Mammary epithelial cell (primary cell): ENCODE measurements at regions of chr3 and their contacts with region 1.

Region 1: DNA sequence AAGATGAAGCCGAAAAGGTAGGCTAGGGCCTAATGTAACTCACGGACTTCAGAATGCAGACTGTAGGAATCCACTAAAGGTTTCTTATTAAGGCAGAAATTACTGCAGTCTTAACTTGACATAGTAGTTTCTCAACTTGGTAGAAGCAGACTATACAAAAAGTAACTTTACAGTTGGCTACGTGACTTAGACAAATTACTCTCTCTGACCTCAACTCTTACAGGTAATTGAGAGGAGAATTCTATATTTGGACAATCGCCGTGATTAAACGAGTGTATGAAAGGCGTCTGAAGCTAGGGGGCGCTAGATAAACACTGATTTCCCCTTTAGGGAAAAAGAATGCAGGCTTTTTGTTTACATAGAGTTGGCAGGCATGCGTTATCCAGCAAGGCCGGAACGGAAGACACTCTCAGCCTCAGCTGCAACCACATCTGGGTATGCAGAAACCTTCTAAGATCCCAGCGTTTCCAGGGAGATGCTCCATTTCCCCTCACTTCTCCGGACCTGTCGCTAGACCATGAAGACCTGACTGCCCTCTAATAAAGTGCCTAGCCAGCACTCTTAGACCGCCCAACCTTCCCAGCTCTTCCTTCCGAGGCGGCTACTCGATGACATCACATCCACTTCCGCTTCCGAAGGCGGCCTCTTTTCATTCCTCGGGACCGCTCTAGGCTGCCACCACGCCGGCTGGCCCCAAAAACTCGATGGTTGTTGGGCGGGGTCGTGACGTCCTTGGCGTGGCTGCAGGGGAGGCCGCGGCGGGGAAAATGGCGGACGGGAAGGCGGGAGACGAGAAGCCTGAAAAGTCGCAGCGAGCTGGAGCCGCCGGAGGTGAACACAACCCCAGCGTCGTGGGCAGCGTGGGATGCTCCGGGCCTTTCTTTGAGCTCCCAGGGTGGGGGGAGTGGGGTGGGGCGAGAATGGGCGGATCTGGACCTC is at the start of gene PCNP:
- DNase-seq: peak; percentile 99
- H3K4me3 ChIP-seq: peak within 1 kb of the TSS; percentile 70 to 98 (median 79)
- H3K27ac ChIP-seq: peak within 1 kb of the TSS; percentile 97
- H3K4me1 ChIP-seq: peaks cover 7% of the 10 kb centered on the region
- H3K27me3 ChIP-seq: no peaks in the 10 kb centered on the region
- CTCF ChIP-seq: peak; percentile 81 to 93
- total RNA-seq, gene PCNP: 85.9 to 176 TPM

Region 2: DNA sequence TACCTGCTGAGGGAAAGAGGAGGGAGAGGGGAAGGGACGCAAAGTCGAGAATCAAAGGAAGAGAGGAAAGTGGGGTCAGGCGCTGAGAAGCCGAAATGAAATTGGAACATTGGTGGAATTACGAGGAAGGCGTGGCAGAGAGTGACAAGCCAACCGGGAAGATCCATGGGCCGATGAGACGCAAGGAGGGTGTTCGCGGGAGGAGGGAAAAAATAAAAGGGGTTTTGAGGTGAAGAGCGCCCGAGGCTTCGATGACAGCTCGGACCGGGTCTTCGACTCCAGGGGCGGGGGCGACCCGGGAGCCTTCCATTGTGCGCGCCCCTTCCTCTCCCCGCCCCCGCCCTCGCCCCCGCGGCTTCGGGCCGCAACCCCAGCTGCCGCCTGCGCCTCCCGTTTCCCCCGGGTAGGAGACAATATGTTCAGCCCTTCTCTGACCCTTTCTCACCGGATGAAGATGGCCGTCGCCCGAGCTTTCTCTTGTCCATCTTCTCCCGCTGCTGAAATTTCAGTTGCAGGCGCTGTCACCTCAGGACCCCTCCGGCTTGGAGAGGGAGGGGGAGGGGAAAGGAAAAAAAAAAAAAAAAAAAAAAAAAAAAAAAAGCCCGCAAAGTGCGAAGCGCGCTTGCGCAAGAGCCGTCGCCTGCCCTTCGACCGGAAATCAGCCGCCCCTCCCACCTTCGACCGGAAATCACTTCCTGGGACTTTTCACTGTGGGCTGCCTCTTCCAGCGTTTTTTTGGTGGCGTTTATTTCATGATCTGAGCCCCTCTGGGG is 60.9 kb before region 1 on chr3 and contains the start of gene SENP7:
- CTCF ChIA-PET with region 1: no interaction called
- dilution Hi-C with region 1: no loop called
- in situ Hi-C with region 1: no loop called
- intact Hi-C with region 1: loop called (anchors 5 kb)
- DNase-seq: peak; percentile 83
- H3K4me3 ChIP-seq: peak within 1 kb of the TSS; percentile 68 to 94 (median 69)
- H3K27ac ChIP-seq: peak within 1 kb of the TSS; percentile 85
- H3K4me1 ChIP-seq: peaks cover 14% of the 10 kb centered on the region
- H3K27me3 ChIP-seq: no peaks in the 10 kb centered on the region
- CTCF ChIP-seq: no peak
- total RNA-seq, gene SENP7: 7.2 to 8.9 TPM

Region 3: DNA sequence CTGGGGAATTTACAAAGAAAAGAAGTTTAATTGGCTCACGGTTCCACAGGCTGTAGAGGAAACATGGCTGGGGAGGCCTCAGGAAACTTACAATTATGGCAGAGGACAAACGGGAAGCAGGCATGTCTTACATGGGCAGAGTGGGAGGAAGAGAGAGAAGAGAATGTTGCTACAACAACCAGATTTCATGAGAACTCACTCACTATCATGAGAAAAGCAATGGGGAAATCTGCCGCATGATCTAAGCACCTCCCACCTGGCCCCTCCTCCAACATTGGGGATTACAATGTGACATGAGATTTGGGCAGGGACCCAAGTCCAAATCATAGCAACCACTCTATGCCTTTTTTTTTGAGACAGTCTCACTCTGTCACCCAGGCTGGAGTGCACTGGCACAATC is 29.0 kb after region 1 on chr3:
- CTCF ChIA-PET with region 1: no interaction called
- dilution Hi-C with region 1: no loop called
- in situ Hi-C with region 1: no loop called
- intact Hi-C with region 1: loop called (anchors 1 kb)
- DNase-seq: no peak
- H3K4me3 ChIP-seq: no peak overlapping the region
- H3K27ac ChIP-seq: peak overlapping the region; percentile 79
- H3K4me1 ChIP-seq: peaks cover 10% of the 10 kb centered on the region
- H3K27me3 ChIP-seq: no peaks in the 10 kb centered on the region
- CTCF ChIP-seq: no peak

Region 4: GRCh38 chr3:101635954-101636798 is 62.5 kb after region 1 on chr3:
- CTCF ChIA-PET with region 1: no interaction called
- dilution Hi-C with region 1: no loop called
- in situ Hi-C with region 1: no loop called
- intact Hi-C with region 1: loop called (anchors 1 kb)
- DNase-seq: peak; percentile 37
- H3K4me3 ChIP-seq: no peak overlapping the region
- H3K27ac ChIP-seq: no peak overlapping the region
- H3K4me1 ChIP-seq: no peaks in the 10 kb centered on the region
- H3K27me3 ChIP-seq: no peaks in the 10 kb centered on the region
- CTCF ChIP-seq: peak; percentile 49 to 60

Region 5: DNA sequence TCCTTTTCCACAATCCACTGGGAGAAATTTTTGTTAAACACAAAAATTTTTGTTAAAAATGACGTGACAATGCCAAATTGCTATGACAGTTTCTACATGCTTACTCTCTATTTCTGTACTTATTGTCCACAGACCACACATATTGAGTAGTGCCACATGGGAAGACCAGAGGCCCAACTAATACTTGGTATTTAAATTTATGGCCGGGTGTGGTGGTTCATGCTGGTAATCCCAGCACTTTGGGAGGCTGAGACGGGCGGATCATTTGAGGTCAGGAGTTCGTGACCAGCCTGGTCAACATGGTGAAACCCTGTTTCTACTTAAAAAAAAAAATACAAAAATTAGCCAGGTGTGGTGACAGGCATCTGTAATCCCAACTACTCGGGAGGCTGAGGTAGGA is 82.9 kb after region 1 on chr3:
- CTCF ChIA-PET with region 1: no interaction called
- dilution Hi-C with region 1: no loop called
- in situ Hi-C with region 1: no loop called
- intact Hi-C with region 1: loop called (anchors 5 kb)
- DNase-seq: no peak
- H3K4me3 ChIP-seq: no peak overlapping the region
- H3K27ac ChIP-seq: no peak overlapping the region
- H3K4me1 ChIP-seq: no peaks in the 10 kb centered on the region
- H3K27me3 ChIP-seq: no peaks in the 10 kb centered on the region
- CTCF ChIP-seq: no peak

Region 6: DNA sequence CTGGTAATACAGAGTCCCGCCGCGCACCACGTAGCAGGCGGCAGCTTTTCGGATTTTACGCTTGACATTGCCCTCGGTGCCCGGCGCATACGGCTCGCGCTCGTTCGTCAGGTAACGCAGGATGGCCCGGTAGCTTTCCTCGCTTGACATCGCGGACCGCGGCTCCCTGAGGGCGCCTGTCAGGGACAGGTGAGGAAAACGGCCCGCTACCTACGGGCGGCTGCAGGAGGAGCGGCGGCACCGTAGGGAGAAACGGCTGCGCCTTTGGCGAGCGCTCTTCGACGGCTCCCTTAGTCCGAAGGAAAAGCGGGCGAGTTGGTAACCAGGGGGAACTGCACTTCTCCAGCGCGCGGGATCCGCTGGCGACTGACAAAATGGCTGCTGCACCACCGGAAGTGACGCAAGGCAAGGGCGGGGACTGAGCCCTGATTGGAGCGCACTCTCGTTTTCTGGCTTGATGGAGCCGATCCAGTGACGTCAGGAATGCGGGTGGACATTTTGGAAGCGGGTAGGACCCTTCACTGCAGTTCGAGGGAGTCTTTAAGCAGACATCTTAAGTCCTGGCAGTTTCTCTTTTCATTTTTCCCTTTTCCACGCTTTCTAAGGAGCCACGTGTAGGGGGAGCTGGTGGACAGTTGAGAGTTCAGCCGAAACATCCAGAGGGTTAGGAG is 103.2 kb after region 1 on chr3 and contains the start of gene ZBTB11:
- CTCF ChIA-PET with region 1: no interaction called
- dilution Hi-C with region 1: no loop called
- in situ Hi-C with region 1: no loop called
- intact Hi-C with region 1: loop called (anchors 1 kb)
- DNase-seq: peak; percentile 99
- H3K4me3 ChIP-seq: peak within 1 kb of the TSS; percentile 65 to 87 (median 66)
- H3K27ac ChIP-seq: peak within 1 kb of the TSS; percentile 85
- H3K4me1 ChIP-seq: peaks cover 13% of the 10 kb centered on the region
- H3K27me3 ChIP-seq: no peaks in the 10 kb centered on the region
- CTCF ChIP-seq: peak; percentile 49 to 64
- total RNA-seq, gene ZBTB11: 20.3 to 25.3 TPM